Calu3 (cell line): ENCODE measurements at regions of chr1 and their contacts with region 1.

Region 1: GRCh38 chr1:112390775-112391602 is 5.0 kb upstream of the CTTNBP2NL start:
- DNase-seq: peak; percentile 83
- H3K4me3 Mint-ChIP-seq: peak overlapping the region; percentile 66
- H3K27ac Mint-ChIP-seq: peak overlapping the region; percentile 81
- H3K4me1 Mint-ChIP-seq: peaks cover 44% of the 10 kb centered on the region
- H3K27me3 Mint-ChIP-seq: no peaks in the 10 kb centered on the region
- CTCF ChIP-seq: peak; percentile 75

Region 2: GRCh38 chr1:112312315-112312714 is 78.7 kb before region 1 on chr1:
- CTCF ChIA-PET with region 1: no interaction called
- intact Hi-C with region 1: no loop called
- DNase-seq: no peak
- H3K4me3 Mint-ChIP-seq: no peak overlapping the region
- H3K27ac Mint-ChIP-seq: no peak overlapping the region
- H3K4me1 Mint-ChIP-seq: no peaks in the 10 kb centered on the region
- H3K27me3 Mint-ChIP-seq: peaks cover 77% of the 10 kb centered on the region
- CTCF ChIP-seq: no peak

Region 3: GRCh38 chr1:112466078-112466660 is 75.2 kb after region 1 on chr1:
- CTCF ChIA-PET with region 1: interaction called, 8 read pairs
- intact Hi-C with region 1: loop called (anchors 1 kb)
- DNase-seq: peak; percentile 90
- H3K4me3 Mint-ChIP-seq: peak overlapping the region; percentile 60
- H3K27ac Mint-ChIP-seq: peak overlapping the region; percentile 88
- H3K4me1 Mint-ChIP-seq: peaks cover 36% of the 10 kb centered on the region
- H3K27me3 Mint-ChIP-seq: no peaks in the 10 kb centered on the region
- CTCF ChIP-seq: peak; percentile 61

Region 4: GRCh38 chr1:112619520-112620376 is 228.8 kb after region 1 on chr1 and contains the start of gene CAPZA1:
- CTCF ChIA-PET with region 1: interaction called, 3 read pairs
- intact Hi-C with region 1: loop called (anchors 5 kb)
- DNase-seq: peak; percentile 84
- H3K4me3 Mint-ChIP-seq: peak within 1 kb of the TSS; percentile 93
- H3K27ac Mint-ChIP-seq: peak within 1 kb of the TSS; percentile 97
- H3K4me1 Mint-ChIP-seq: peaks cover 1% of the 10 kb centered on the region
- H3K27me3 Mint-ChIP-seq: no peaks in the 10 kb centered on the region
- CTCF ChIP-seq: no peak
- total RNA-seq, gene CAPZA1: 103 and 117 TPM in 2 replicates